ENCODE measurements at regions of chr4 and their contacts with region 1.

Region 1: GRCh38 chr4:169270810-169271691 is at the start of gene SH3RF1:
- DNase-seq: peak; percentile 94
- ATAC-seq: peak; percentile 97
- total RNA-seq, gene SH3RF1: 8.8 TPM

Region 2: GRCh38 chr4:169010125-169011023 is 260.7 kb before region 1 on chr4 and contains the start of gene CBR4:
- intact Hi-C with region 1: loop called (anchors 5 kb)
- DNase-seq: peak; percentile 100
- ATAC-seq: peak; percentile 99
- total RNA-seq, gene CBR4: 19.4 TPM

Region 3: GRCh38 chr4:169054879-169055278 is 216.2 kb before region 1 on chr4:
- intact Hi-C with region 1: loop called (anchors 5 kb)
- DNase-seq: no peak
- ATAC-seq: no peak

Region 4: DNA sequence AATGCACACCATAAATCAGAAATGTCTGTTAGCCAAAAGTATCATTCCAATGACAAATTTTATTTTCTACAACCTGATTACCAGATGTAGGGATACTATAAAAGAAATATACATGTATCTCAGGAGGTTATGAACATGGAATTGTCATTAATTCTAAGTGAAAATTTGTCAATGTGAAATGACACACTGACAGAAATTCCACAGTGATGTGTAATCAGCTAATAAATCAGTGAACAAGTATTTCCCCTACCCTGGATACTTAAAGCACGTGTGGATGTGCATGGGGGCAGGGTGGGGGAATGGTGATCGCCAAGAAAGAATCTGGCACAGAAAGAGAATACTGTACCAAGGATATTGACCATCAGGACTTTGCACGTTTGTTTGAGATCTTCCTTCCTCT is 123.9 kb before region 1 on chr4:
- intact Hi-C with region 1: loop called (anchors 5 kb)
- DNase-seq: no peak
- ATAC-seq: no peak

Region 5: GRCh38 chr4:169311643-169312365 is 40.8 kb after region 1 on chr4:
- intact Hi-C with region 1: loop called (anchors 5 kb)
- DNase-seq: no peak
- ATAC-seq: peak; percentile 67

Region 6: GRCh38 chr4:169404960-169405359 is 133.9 kb after region 1 on chr4:
- intact Hi-C with region 1: loop called (anchors 10 kb)
- DNase-seq: no peak
- ATAC-seq: no peak